PC-3 (cell line): ENCODE measurements at regions of chr12 and their contacts with region 1.

Region 1: GRCh38 chr12:62966990-62967506 is 32.1 kb upstream of the PPM1H start:
- DNase-seq: peak; percentile 50
- ATAC-seq: peak; percentile 57
- H3K4me3 ChIP-seq: peak overlapping the region; percentile 16; the same call in 1 of the 2 replicates
- H3K27ac ChIP-seq: peak overlapping the region; percentile 78
- H3K4me1 ChIP-seq: peaks cover 39% of the 10 kb centered on the region
- H3K27me3 ChIP-seq: no peaks in the 10 kb centered on the region
- CTCF ChIP-seq: no peak

Region 2: DNA sequence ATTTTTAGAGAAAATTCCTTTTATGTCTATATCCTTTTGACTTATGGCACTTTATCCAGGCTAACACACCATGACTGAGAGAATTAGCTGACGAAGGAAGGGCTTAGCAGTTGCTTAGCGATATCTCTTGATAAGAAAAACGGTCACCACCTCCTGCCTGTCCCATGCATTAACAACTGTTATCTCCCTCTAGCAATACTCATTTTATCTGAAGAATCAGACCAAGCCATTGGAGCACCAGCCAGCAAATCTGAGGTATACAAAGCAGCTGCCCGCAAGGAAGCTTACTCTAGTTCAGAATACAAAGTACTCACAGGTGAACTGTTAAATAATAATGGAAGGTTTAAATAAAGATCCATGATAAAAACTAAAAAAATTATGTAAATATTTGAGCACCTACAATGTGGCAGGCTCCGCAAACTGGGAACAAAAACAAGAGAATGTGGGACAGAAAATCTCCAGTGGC is 56.4 kb before region 1 on chr12:
- CTCF ChIA-PET with region 1: no interaction called
- POLR2A ChIA-PET with region 1: no interaction called
- intact Hi-C with region 1: no loop called
- DNase-seq: no peak
- ATAC-seq: no peak
- H3K4me3 ChIP-seq: no peak overlapping the region
- H3K27ac ChIP-seq: no peak overlapping the region
- H3K4me1 ChIP-seq: peaks cover 3% of the 10 kb centered on the region; the same call in 1 of the 2 replicates
- H3K27me3 ChIP-seq: no peaks in the 10 kb centered on the region
- CTCF ChIP-seq: no peak

Region 3: DNA sequence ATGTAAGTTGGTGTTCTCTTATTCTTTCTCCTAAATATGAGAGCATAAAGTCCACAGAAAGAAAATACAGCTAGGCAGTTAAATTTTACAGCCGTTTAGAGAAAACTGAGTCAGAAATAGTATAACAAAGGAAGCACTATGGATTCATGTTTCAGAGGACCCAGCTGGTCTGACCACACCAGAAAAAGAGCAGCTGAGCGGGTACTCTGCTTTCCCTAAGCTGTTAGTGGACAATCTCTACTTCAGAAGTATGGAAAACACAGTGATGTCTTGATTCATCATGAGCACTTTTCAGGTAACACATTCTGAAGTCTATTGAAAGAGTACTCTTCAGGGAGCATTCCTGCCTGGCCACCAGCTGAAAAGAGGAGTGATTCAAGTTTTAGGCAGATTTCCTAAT is 44.5 kb before region 1 on chr12:
- CTCF ChIA-PET with region 1: no interaction called
- POLR2A ChIA-PET with region 1: interaction called, 17 read pairs
- intact Hi-C with region 1: no loop called
- DNase-seq: peak; percentile 84
- ATAC-seq: peak; percentile 94
- H3K4me3 ChIP-seq: peak overlapping the region; percentile 14; the same call in 1 of the 2 replicates
- H3K27ac ChIP-seq: peak overlapping the region; percentile 62
- H3K4me1 ChIP-seq: peaks cover 39% of the 10 kb centered on the region
- H3K27me3 ChIP-seq: no peaks in the 10 kb centered on the region
- CTCF ChIP-seq: no peak

Region 4: DNA sequence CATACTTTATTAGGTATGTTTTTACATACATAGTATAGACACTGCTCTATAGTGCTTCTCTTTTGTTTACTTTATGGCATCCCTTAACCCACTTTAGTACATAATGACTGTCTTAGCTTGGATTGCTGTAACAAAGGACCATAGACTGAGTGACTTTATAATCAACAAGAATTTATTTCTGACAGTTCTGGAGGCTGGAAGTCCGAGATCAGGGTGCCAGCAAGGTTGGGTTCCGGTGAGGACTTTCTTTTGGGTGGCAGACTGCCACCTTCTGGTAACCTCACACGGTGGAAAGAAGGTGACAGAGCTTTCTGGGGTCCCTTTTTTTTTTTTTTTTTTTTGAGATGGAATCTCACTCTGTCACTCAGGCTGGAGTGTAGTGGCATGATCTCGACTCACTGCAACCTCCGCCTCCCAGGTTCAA is 16.6 kb after region 1 on chr12:
- CTCF ChIA-PET with region 1: no interaction called
- POLR2A ChIA-PET with region 1: no interaction called
- intact Hi-C with region 1: loop called (anchors 2 kb)
- DNase-seq: peak; percentile 39
- ATAC-seq: no peak; the same call in 1 of the 2 replicates
- H3K4me3 ChIP-seq: no peak overlapping the region
- H3K27ac ChIP-seq: no peak overlapping the region
- H3K4me1 ChIP-seq: peaks cover 24% of the 10 kb centered on the region
- H3K27me3 ChIP-seq: no peaks in the 10 kb centered on the region
- CTCF ChIP-seq: peak; percentile 56

Region 5: DNA sequence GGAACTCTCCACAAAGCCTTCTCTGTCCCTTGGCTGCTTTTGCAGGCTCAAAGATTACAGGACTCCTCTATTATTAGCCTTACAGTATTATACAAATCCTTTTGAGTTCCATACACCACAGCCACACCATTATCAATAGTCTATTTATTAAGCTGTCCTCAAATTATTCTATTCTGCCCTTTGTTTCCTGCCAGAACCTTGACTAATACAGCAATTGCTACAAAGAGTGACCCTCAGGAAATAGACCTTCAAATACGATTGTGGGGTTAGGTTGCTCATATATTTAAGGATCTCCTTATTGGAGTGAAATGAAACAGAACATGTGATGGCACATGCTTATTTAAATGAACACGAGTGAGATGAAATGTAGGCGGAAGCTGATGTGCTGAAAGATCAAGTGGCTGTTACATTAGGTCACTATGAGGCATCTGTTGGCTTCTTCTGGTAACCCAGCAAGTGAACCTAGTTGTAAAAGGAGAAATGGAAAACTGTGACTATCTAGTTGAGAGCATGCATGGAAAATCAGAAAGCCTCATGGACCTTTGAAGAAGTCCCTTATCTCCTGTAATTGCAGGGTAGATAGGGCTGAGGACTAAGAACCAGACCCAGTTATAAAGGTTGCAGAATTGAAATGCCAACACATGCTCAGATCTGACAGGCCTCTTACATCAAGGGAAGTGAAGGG is 108.5 kb after region 1 on chr12:
- CTCF ChIA-PET with region 1: no interaction called
- POLR2A ChIA-PET with region 1: no interaction called
- intact Hi-C with region 1: no loop called
- DNase-seq: no peak
- ATAC-seq: no peak
- H3K4me3 ChIP-seq: no peak overlapping the region
- H3K27ac ChIP-seq: no peak overlapping the region
- H3K4me1 ChIP-seq: no peaks in the 10 kb centered on the region
- H3K27me3 ChIP-seq: no peaks in the 10 kb centered on the region
- CTCF ChIP-seq: no peak